ENCODE measurements at regions of chr4 and their contacts with region 1.

Region 1: DNA sequence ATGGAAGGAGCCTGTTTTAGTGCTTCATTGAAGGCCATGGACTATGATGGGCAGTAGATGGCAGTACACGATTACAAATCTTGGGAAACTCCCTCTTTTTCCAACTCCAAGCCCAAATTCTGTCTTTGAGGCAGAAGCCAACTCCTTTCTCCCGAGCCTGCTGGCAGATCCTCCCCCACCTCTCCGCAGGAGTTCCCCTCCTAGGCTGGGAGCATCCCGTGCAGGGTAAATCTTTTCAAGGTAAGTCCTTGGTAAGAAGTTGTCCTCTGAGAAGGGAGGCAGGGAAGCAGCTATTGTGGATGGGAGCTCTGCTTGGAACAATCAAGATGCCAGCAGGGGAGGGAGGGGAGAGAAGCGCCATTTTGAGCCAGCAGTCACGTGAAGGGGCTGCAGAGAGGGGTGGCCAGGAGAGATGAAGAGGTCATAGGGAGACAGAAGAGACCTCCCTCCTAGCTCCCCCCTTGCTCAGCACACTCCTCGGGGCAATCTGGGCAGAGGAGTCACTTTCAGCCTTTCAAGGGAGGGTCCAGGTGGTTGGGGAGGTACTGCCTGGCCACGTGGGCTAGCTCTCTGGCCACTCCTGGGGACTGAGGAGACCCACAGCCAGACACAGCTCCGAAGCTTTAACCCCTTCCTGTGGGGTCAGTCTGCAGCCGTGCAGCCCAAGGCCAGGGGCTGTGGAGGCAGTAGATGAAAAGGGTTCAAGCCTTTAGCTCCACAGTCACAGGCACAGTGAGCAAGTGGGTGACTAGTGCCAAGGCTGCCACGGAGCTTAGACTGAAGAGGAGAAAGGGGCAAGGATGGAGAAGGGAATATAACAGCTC is 9.6 kb downstream of the CC2D2A start:
- DNase-seq: peak; percentile 56
- H3K4me3 ChIP-seq: peak overlapping the region; percentile 49
- H3K27me3 ChIP-seq: no peaks in the 10 kb centered on the region
- CTCF ChIP-seq: peak; percentile 77

Region 2: GRCh38 chr4:15504041-15504440 is 24.7 kb after region 1 on chr4:
- CTCF ChIA-PET with region 1: no interaction called
- POLR2A ChIA-PET with region 1: no interaction called
- DNase-seq: no peak
- H3K4me3 ChIP-seq: no peak overlapping the region
- H3K27me3 ChIP-seq: no peaks in the 10 kb centered on the region
- CTCF ChIP-seq: no peak

Region 3: DNA sequence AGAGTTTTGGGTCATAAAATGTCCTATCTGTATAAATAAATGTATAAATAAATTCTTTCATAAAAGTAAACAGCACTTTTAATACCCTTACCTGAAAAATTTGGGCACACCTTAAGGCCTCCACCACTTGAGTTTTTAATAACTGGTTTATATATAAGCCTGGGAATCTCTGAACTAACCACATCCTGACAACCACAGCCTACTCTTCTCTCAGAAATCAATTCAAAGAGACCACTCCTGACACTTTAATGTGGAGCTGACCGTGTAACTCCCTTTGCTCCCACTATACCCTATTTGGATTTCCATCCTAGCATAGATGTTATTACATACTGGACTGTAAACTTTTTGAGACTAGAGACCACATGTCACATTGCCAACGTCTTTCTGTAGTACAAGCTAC is 172.4 kb after region 1 on chr4:
- CTCF ChIA-PET with region 1: interaction called, 14 read pairs
- POLR2A ChIA-PET with region 1: no interaction called
- DNase-seq: no peak
- H3K4me3 ChIP-seq: no peak overlapping the region
- H3K27me3 ChIP-seq: no peaks in the 10 kb centered on the region
- CTCF ChIP-seq: no peak

Region 4: GRCh38 chr4:15805583-15806517 is 326.5 kb after region 1 on chr4:
- CTCF ChIA-PET with region 1: interaction called, 12 read pairs
- POLR2A ChIA-PET with region 1: no interaction called
- DNase-seq: no peak
- H3K4me3 ChIP-seq: no peak overlapping the region
- H3K27me3 ChIP-seq: peaks cover 3% of the 10 kb centered on the region; the same call in 1 of the 2 replicates
- CTCF ChIP-seq: peak; percentile 71